K562 (cell line): ENCODE measurements at regions of chr20 and their contacts with region 1.

Region 1: GRCh38 chr20:51220293-51220706 is 197.4 kb upstream of the KCNG1 start:
- DNase-seq: peak; percentile 44 to 77 (median 74)
- ATAC-seq: peak; percentile 92
- H3K4me3 ChIP-seq: no peak overlapping the region
- H3K27ac ChIP-seq: no peak overlapping the region
- H3K4me1 ChIP-seq: peaks cover 0 to 3% of the 10 kb centered on the region in 2 experiments; a peak in 2 of 5 replicates
- H3K27me3 ChIP-seq: peaks cover 0 to 9% of the 10 kb centered on the region in 2 experiments; a peak in 2 of 5 replicates
- CTCF ChIP-seq: peak; percentile 75 to 86 (median 81)
- EP300 ChIP-seq: no peak
- POLR2A ChIP-seq: no peak
- RAD21 ChIP-seq: peak; percentile 18 to 62; a peak in 3 of 4 replicates

Region 2: GRCh38 chr20:50992733-50993457 is 227.4 kb before region 1 on chr20:
- CTCF ChIA-PET with region 1: no interaction called
- POLR2A ChIA-PET with region 1: no interaction called
- in situ Hi-C with region 1: no loop called
- intact Hi-C with region 1: loop called (anchors 5 kb)
- DNase-seq: peak; percentile 82 to 95 (median 93)
- ATAC-seq: peak; percentile 100
- H3K4me3 ChIP-seq: no peak overlapping the region
- H3K27ac ChIP-seq: no peak overlapping the region
- H3K4me1 ChIP-seq: 0 out of 5 replicates have a peak, but pooled peaks cover 0 to 5% of the 10 kb centered on the region in 2 experiments
- H3K27me3 ChIP-seq: peaks cover 14 to 38% of the 10 kb centered on the region in 2 experiments; a peak in 4 of 5 replicates
- CTCF ChIP-seq: peak; percentile 80 to 95 (median 94)
- EP300 ChIP-seq: no peak
- POLR2A ChIP-seq: no peak
- RAD21 ChIP-seq: peak; percentile 86 to 93